Endothelial cell of umbilical vein (primary cell): ENCODE measurements at regions of chr17 and their contacts with region 1.

Region 1: GRCh38 chr17:68398691-68399637 is 58.3 kb downstream of the WIPI1 start:
- DNase-seq: peak; percentile 76
- H3K4me3 ChIP-seq: no peak overlapping the region
- H3K27ac ChIP-seq: no peak overlapping the region
- H3K4me1 ChIP-seq: peaks cover 11% of the 10 kb centered on the region
- H3K27me3 ChIP-seq: no peaks in the 10 kb centered on the region
- CTCF ChIP-seq: peak; percentile 90 to 91
- POLR2A ChIP-seq: no peak

Region 2: DNA sequence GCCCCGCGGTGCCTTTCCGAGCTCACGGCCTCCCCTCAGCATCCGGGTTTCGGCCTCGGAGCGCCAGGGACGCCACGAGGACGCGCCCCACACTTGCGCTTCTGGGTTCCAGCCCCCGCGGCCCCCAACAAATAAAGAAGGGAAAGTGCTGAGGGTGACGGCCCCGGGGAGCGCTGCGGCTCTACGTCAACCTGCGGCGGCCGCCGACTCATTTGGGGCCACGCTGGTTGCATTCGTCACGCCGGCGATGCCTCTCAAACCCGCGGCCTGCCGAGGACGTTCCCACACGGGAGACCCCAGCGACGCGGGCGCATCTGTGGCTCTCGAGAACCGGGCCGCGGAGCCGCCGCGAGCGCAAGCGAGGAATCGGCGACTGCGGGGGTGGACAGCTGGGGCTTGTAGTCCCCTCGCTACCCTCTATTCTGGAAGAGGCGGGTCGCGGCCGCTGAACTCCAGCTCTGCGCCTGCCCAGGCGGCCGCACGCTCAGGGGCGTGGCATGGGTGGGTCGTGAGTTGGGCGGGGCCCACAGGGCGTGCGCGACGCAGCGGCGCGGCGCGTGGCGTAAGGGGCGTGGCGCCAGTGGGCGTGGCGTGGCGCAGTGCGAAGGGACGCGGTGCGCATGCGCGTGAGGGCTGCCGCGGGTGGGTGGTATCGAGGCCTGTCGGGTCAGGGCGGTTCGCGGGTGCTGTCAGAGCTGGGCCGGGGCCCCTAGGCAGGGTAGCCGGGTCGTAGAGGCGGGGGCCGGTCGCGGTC is 151.3 kb before region 1 on chr17 and contains the start of gene AMZ2:
- CTCF ChIA-PET with region 1: interaction called, 12 read pairs
- POLR2A ChIA-PET with region 1: interaction called, 3 read pairs
- dilution Hi-C with region 1: no loop called
- intact Hi-C with region 1: no loop called
- DNase-seq: peak; percentile 96
- H3K4me3 ChIP-seq: peak within 1 kb of the TSS; percentile 41 to 63 (median 51)
- H3K27ac ChIP-seq: peak within 1 kb of the TSS; percentile 54
- H3K4me1 ChIP-seq: peaks cover 8% of the 10 kb centered on the region
- H3K27me3 ChIP-seq: no peaks in the 10 kb centered on the region
- CTCF ChIP-seq: no peak
- POLR2A ChIP-seq: peak; percentile 89
- total RNA-seq, gene AMZ2: 53.7 and 57.3 TPM in 2 replicates

Region 3: DNA sequence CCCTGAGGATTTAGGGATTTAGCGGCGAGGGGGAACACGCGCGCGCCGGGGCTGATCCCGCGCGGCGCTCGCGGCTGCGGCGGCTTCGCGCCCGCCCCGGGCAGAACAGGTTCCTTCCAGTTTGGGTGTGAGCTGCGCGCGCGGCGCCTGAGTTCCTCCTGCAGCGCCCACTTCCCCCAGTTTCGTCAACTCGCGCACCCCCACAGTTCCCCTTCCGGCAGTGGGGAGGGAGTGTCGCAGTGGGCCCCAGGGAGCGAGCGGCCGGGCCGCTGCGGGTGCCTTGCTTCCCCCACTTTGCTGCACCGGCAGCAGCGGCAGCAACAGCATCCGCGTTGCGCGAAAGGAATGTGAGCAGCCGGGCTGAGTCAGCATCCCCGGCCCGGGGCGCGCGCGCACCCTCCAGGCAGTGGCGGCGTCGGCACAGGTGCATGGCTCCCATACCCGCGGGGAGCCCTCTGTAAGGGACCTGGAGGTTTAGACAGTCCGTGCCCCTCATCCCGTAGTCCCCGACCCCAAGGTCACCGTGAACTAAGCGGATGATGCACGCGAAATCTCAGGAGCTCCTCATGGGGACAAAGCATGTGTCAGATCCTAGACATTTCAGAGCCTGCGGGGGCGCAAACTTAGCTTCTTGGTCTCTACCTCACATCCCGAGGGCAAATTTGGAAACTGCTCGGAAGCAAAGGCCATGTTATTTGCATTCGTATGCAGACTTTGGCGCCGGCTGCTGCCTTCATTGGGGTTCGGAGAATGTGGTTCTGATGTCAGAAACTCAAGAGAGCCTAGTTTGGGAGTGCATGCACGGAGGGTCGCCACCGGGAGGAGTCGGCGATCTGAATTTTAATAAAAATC is 106.9 kb before region 1 on chr17:
- CTCF ChIA-PET with region 1: interaction called, 104 read pairs
- POLR2A ChIA-PET with region 1: no interaction called
- dilution Hi-C with region 1: no loop called
- intact Hi-C with region 1: loop called (anchors 1 kb)
- DNase-seq: peak; percentile 74
- H3K4me3 ChIP-seq: peak overlapping the region; percentile 53 to 74 (median 66)
- H3K27ac ChIP-seq: peak overlapping the region; percentile 48
- H3K4me1 ChIP-seq: peaks cover 15% of the 10 kb centered on the region
- H3K27me3 ChIP-seq: no peaks in the 10 kb centered on the region
- CTCF ChIP-seq: peak; percentile 16 to 31
- POLR2A ChIP-seq: peak; percentile 57

Region 4: DNA sequence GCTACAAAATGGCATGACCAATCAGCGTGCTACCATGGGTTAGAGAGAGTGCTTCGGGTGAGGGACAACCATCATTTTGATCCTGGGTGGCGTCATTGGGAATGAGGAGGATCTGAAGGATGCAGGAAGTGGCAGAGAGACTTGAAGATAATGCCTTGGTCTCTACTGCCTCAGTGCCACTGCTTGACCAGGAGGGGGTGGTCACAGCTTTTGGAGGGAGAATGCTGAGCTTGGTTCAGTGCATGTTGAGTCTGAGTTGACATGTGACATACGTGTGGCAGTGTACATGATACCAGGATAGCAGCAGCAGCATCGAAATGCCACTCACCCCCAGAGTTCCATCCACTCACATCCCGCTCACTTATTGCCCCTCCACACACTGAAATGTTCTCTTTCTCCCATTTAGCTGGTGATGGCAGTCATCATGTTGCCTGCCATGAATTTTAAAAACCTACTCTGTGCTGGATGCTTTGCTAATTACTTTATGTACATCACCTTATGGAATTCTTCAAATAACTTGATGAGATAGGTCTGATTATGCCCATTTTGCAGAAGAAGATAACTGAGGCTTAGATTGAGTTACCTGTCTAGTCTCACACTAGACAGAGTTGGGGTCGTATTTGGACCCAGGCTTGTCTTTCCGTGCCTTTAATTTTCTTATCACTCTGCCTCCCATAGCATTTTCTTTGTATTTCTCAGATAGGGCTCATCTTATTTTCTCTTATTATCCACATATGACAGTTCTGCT is 71.0 kb before region 1 on chr17:
- CTCF ChIA-PET with region 1: interaction called, 44 read pairs
- POLR2A ChIA-PET with region 1: no interaction called
- dilution Hi-C with region 1: no loop called
- intact Hi-C with region 1: no loop called
- DNase-seq: no peak
- H3K4me3 ChIP-seq: no peak overlapping the region
- H3K27ac ChIP-seq: no peak overlapping the region
- H3K4me1 ChIP-seq: no peaks in the 10 kb centered on the region
- H3K27me3 ChIP-seq: no peaks in the 10 kb centered on the region
- CTCF ChIP-seq: no peak
- POLR2A ChIP-seq: no peak

Region 5: GRCh38 chr17:68351395-68351794 is 47.6 kb before region 1 on chr17:
- CTCF ChIA-PET with region 1: interaction called, 28 read pairs
- POLR2A ChIA-PET with region 1: no interaction called
- dilution Hi-C with region 1: no loop called
- intact Hi-C with region 1: no loop called
- DNase-seq: no peak
- H3K4me3 ChIP-seq: no peak overlapping the region
- H3K27ac ChIP-seq: no peak overlapping the region
- H3K4me1 ChIP-seq: peaks cover 14% of the 10 kb centered on the region
- H3K27me3 ChIP-seq: no peaks in the 10 kb centered on the region
- CTCF ChIP-seq: no peak
- POLR2A ChIP-seq: no peak

Region 6: DNA sequence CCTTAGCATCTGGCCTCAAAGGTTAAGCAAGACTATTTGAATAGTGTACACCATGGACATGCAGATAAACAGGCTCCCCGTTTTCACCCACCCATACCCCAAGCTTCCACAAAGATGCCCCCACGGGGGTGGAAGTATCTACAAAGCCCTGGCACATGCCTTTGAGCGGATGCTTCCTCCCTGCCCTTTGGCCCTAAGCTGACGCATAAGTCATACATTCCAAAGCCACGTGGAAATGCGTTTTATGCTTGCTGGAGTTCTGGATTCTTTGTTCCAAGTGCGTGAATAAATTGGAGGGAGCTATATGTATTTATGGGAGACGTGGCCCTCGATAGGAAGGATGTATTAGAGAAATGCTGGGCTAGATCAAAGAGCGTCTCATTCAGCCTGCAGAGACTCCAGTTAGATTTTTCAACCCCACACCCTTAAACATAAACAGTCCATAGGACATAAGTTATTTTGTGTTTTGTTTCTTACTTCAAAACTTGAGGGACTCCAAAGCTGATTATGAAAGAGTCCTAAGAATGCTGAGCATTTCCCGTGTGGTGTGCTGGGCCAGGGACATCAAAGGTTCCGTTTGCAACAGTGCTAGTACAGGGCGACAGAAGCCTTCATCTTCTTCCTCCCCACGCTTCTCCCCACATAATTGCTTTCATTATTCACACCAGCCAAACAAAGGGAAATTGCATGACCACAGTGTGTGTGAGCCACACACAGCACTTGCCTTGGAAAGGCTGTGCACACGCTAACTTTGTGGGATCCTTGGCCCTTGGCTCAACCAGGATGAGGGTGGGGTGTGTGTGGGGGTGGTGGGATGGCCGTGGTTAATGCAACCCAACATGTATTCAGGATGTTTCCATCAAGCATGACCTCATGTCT is 15.3 kb before region 1 on chr17:
- CTCF ChIA-PET with region 1: interaction called, 48 read pairs
- POLR2A ChIA-PET with region 1: interaction called, 5 read pairs
- dilution Hi-C with region 1: no loop called
- intact Hi-C with region 1: loop called (anchors 2 kb)
- DNase-seq: peak; percentile 82
- H3K4me3 ChIP-seq: no peak overlapping the region
- H3K27ac ChIP-seq: peak overlapping the region; percentile 76
- H3K4me1 ChIP-seq: peaks cover 37% of the 10 kb centered on the region
- H3K27me3 ChIP-seq: no peaks in the 10 kb centered on the region
- CTCF ChIP-seq: no peak
- POLR2A ChIP-seq: peak; percentile 20

Region 7: DNA sequence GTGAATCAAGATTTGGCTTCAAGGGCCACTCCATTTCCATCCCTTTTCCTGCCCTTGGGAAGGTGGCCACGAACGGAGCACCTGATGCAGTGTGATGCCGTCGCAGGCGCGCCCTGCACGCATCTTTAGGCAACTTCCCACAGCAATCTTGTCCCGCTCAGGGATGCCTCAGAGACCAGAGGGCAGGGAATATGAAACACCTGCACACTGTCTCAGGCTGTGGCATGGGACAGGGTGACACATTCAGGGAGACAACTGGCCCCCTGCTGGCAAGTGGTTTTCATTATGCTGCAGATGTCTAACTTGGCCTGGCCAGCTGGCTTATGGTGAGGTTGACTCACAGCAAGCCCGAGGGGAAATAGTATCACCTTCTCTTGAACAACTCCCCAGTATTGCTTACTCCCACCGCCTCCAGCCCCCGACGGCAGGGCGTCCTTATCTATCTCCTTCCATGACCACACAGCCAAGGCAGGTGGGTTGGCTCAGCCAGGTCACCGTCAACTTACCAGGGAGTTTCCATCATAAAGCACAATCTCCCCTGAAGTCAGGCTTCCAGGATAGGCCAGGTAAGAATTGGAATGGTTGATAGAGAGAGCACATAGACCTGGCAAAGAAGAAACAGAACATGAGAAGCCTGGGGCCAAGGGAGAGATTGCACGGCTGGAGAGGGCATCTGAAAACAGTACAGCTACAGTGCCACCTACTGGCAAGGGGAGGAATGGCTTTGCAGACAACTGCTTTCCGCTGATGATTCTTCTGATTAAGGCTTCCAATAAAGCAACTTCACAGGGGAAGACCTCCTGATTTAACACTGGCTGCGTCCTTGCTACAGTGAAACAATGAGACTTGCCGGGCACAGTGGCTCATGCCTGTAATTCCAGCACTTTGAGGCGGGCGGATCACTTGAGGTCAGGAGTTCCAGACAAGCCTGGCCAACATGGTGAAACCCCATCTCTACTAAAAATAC is 37.2 kb after region 1 on chr17:
- CTCF ChIA-PET with region 1: interaction called, 41 read pairs
- POLR2A ChIA-PET with region 1: no interaction called
- dilution Hi-C with region 1: no loop called
- intact Hi-C with region 1: loop called (anchors 1 kb)
- DNase-seq: peak; percentile 83
- H3K4me3 ChIP-seq: no peak overlapping the region
- H3K27ac ChIP-seq: peak overlapping the region; percentile 63
- H3K4me1 ChIP-seq: peaks cover 30% of the 10 kb centered on the region
- H3K27me3 ChIP-seq: no peaks in the 10 kb centered on the region
- CTCF ChIP-seq: peak; percentile 89 to 95
- POLR2A ChIP-seq: no peak

Region 8: GRCh38 chr17:68512247-68512982 is 113.5 kb after region 1 on chr17 and contains the start of gene PRKAR1A:
- CTCF ChIA-PET with region 1: no interaction called
- POLR2A ChIA-PET with region 1: no interaction called
- dilution Hi-C with region 1: no loop called
- intact Hi-C with region 1: no loop called
- DNase-seq: peak; percentile 95
- H3K4me3 ChIP-seq: peak within 1 kb of the TSS; percentile 61 to 84 (median 83)
- H3K27ac ChIP-seq: peak within 1 kb of the TSS; percentile 86
- H3K4me1 ChIP-seq: peaks cover 18% of the 10 kb centered on the region
- H3K27me3 ChIP-seq: no peaks in the 10 kb centered on the region
- CTCF ChIP-seq: no peak
- POLR2A ChIP-seq: peak; percentile 92
- total RNA-seq, gene PRKAR1A: 238 and 257 TPM in 2 replicates